OCI-LY7 (cell line): ENCODE measurements at regions of chr3 and their contacts with region 1.

Region 1: DNA sequence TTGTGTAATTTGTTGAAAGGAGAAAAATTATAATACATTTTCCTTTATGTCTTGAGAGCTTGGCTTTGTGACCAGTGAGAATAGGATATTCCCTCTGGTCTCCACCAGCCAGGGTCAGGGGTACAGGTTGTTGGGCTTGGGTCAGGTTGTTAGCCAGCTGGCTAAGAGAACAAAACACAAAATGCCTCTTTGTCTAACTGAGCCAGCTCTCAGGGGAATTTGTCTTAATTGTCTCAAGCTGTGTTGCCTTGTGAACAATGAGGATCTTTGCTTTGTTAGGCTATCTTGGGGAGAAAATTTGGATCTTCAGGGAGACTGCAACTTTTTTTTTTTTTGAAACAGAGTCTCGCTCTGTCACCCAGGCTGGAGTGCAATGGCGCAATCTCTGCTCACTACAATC is 17.7 kb upstream of the GK5 start:
- DNase-seq: no peak
- H3K4me3 ChIP-seq: no peak overlapping the region
- H3K27ac ChIP-seq: no peak overlapping the region
- H3K4me1 ChIP-seq: no peaks in the 10 kb centered on the region
- CTCF ChIP-seq: no peak

Region 2: GRCh38 chr3:141830508-141830907 is 412.6 kb before region 1 on chr3:
- CTCF ChIA-PET with region 1: no interaction called
- POLR2A ChIA-PET with region 1: no interaction called
- intact Hi-C with region 1: loop called (anchors 10 kb)
- DNase-seq: no peak
- H3K4me3 ChIP-seq: no peak overlapping the region
- H3K27ac ChIP-seq: no peak overlapping the region
- H3K4me1 ChIP-seq: no peaks in the 10 kb centered on the region
- CTCF ChIP-seq: no peak

Region 3: DNA sequence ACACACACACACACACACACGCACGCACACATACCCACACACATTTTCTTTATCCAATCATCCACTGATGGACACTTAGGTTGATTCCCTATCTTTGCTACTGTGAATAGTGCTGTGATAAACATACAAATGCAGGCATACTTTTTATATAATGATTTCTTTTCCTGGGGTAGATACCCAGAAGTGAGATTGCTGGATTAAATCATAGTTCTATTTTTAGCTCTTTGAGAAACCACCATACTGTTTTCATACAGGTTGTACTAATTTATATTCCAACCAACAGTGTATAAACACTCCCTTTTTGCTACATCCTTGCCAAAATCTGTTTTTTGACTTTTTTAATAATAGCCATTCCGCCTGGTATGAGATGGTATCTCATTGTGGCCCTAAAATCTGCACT is 76.8 kb after region 1 on chr3:
- CTCF ChIA-PET with region 1: no interaction called
- POLR2A ChIA-PET with region 1: no interaction called
- intact Hi-C with region 1: no loop called
- DNase-seq: no peak
- H3K4me3 ChIP-seq: no peak overlapping the region
- H3K27ac ChIP-seq: no peak overlapping the region
- H3K4me1 ChIP-seq: no peaks in the 10 kb centered on the region
- CTCF ChIP-seq: no peak

Region 4: GRCh38 chr3:142374687-142375086 is 131.6 kb after region 1 on chr3:
- CTCF ChIA-PET with region 1: no interaction called
- POLR2A ChIA-PET with region 1: no interaction called
- intact Hi-C with region 1: no loop called
- DNase-seq: no peak
- H3K4me3 ChIP-seq: no peak overlapping the region
- H3K27ac ChIP-seq: no peak overlapping the region
- H3K4me1 ChIP-seq: no peaks in the 10 kb centered on the region
- CTCF ChIP-seq: no peak

Region 5: DNA sequence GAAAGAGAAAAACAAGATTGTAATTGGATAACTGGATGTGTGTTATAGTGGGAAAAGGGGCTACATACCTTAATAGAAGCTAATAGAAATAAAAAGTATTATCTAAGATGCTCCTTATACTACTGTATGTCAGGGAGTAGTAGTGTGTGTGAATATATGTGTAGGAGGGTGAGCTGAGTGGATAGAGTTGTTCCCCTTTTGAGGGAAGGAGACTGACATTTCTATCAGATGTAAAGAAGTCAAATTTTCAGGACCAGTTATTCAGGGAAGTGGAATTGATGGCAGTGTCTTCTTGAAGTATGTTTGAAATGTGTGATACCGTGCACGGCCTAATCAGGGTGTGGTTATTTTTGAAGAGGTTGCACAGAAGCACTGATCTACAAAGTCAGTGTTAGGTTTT is 596.7 kb after region 1 on chr3:
- CTCF ChIA-PET with region 1: no interaction called
- POLR2A ChIA-PET with region 1: no interaction called
- intact Hi-C with region 1: no loop called
- DNase-seq: no peak
- H3K4me3 ChIP-seq: no peak overlapping the region
- H3K27ac ChIP-seq: no peak overlapping the region
- H3K4me1 ChIP-seq: no peaks in the 10 kb centered on the region
- CTCF ChIP-seq: no peak